BJ (cell line): ENCODE measurements at regions of chr1 and their contacts with region 1.

Region 1: GRCh38 chr1:109984456-109985275 is at the start of gene AHCYL1:
- DNase-seq: peak; percentile 86
- H3K4me3 ChIP-seq: peak within 1 kb of the TSS; percentile 89
- H3K27me3 ChIP-seq: no peaks in the 10 kb centered on the region
- CTCF ChIP-seq: peak; percentile 96
- polyA plus RNA-seq, gene AHCYL1: 95.5 and 105 TPM in 2 replicates

Region 2: GRCh38 chr1:109548321-109549267 is 436.1 kb before region 1 on chr1 and contains the start of gene GNAI3:
- CTCF ChIA-PET with region 1: interaction called, 19 read pairs
- POLR2A ChIA-PET with region 1: no interaction called
- DNase-seq: peak; percentile 70
- H3K4me3 ChIP-seq: peak within 1 kb of the TSS; percentile 98
- H3K27me3 ChIP-seq: no peaks in the 10 kb centered on the region
- CTCF ChIP-seq: no peak
- polyA plus RNA-seq, gene GNAI3: 4.7 and 9.6 TPM in 2 replicates

Region 3: DNA sequence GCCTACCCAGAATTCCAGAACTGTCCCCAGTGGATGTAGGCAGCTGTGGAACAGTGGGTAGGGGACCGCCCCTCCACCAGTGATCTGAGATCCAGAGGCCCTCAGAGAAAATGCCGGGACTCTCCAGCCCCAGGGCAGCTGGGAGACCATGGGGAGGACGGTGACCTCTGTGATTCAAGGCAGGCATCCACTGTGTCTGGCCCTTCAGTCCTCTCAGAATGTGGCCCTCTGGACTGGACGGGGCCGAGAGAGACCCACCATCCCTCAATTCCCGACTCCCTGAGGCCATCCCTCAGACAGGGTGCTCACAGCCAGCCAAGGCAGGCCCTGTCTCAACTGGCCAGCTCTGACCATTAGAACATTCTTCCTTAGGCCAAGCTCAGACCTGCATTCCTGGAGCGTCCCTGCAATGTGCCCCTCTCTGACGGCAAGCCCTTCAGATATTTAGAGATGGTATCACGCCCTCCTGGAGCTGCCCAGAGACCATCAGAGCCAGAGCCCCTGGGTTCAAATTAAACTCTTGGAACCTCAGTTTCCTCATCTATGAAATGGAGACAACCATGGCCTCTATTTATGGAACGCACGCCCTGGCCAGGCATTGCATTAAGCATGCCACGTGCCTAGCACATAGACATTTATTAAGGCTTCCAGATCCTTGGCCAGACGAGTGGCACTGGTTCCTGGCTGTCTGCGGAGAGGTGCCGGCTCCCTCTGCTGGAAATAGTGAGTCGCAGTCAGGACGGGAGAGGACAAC is 211.3 kb before region 1 on chr1:
- CTCF ChIA-PET with region 1: interaction called, 763 read pairs
- POLR2A ChIA-PET with region 1: interaction called, 9 read pairs
- DNase-seq: no peak
- H3K4me3 ChIP-seq: no peak overlapping the region
- H3K27me3 ChIP-seq: no peaks in the 10 kb centered on the region; the same call in 1 of the 2 replicates
- CTCF ChIP-seq: peak; percentile 91

Region 4: DNA sequence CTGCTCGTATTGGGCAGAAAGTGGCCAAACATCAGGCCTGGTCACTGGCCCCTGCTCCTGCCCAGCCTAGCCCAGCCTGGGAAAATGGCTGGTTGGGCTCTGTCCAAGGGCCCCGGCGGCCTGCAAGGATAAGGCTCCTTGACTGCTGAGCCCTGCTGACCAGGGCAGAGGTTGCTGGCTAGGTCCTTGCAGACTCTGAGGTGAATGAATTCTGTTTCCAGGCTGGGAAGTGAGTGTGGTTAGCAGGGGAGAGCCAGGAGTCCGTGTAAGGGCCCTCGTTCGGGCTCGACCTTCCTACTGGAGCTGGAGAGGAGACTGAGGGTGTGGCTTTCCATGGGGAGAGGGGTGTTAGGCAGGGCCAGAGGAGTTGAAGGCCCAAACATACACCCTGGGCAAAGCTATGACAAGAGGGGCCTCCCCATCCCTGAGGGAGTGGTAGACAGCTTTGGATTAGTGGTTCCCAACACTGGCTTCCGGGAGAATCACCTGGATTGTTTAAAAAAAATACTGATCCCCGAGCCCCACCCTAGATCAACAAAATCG is 53.4 kb before region 1 on chr1:
- CTCF ChIA-PET with region 1: interaction called, 13 read pairs
- POLR2A ChIA-PET with region 1: no interaction called
- DNase-seq: no peak
- H3K4me3 ChIP-seq: no peak overlapping the region
- H3K27me3 ChIP-seq: no peaks in the 10 kb centered on the region
- CTCF ChIP-seq: no peak

Region 5: GRCh38 chr1:109974191-109974590 is 10.5 kb before region 1 on chr1:
- CTCF ChIA-PET with region 1: interaction called, 15 read pairs
- POLR2A ChIA-PET with region 1: no interaction called
- DNase-seq: no peak
- H3K4me3 ChIP-seq: no peak overlapping the region
- H3K27me3 ChIP-seq: no peaks in the 10 kb centered on the region
- CTCF ChIP-seq: no peak

Region 6: DNA sequence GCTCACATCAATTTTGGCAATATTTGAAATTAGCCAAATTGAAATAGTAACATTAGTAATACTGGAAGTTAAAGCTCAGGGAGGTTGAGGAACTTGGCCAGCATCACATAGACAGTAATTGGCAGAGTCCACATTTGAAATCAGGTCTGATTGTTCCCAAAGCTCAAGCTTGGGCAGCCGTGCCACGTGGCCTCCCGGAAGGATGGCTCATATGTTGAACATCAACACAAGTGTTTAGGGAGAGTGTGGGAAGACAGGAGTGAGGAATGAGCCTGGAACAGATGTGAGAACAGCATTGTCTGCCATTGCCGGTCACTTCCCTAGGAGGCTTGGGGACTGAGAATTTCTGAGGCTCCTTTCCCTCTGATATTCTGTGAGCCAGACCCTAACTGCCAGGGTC is 314.3 kb after region 1 on chr1:
- CTCF ChIA-PET with region 1: no interaction called
- POLR2A ChIA-PET with region 1: no interaction called
- DNase-seq: peak; percentile 15
- H3K4me3 ChIP-seq: no peak overlapping the region
- H3K27me3 ChIP-seq: no peaks in the 10 kb centered on the region; the same call in none of the 2 replicates
- CTCF ChIP-seq: no peak